Caco-2 (cell line): ENCODE measurements at regions of chr4 and their contacts with region 1.

Region 1: DNA sequence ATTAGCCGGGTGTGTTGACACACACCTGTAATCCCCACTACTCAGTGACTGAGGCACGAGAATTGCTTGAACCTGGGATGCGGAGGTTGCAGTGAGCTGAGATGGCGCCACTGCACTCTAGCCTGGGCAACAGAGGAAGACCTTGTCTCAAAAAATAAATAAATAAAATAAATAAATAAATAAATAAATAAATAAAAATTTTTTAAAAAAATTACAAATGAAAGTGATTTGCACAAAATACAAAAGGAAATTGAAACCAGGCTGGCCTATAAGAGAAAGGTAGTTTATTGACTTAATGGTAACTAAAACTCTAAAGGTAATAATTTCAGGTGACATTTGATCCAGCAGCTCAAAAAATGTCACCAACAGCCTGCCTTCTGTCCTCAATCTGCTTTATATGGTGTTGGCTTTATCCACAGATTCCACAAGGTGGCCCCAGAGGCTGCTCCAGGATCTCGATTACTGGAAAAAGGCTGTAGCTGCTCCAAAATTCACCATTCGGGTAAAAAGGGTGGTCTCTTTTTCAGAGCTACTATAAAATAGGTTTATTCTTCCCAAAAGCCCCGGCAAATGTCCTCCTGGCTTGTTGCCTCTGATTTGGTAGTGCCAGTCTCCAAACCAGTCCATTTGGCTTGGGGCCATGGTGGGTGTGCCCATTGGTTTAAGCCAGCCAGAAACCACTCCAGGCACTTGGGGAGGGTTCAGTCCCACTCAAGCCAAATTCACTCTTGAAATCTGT is 61.4 kb upstream of the TRIM2 start:
- DNase-seq: peak; percentile 74 to 78
- H3K4me3 ChIP-seq: no peak overlapping the region
- H3K4me3 Mint-ChIP-seq: no peak overlapping the region
- H3K27ac Mint-ChIP-seq: peak overlapping the region; percentile 53
- H3K4me1 ChIP-seq: peaks cover 8% of the 10 kb centered on the region
- H3K4me1 Mint-ChIP-seq: peaks cover 13% of the 10 kb centered on the region
- H3K27me3 ChIP-seq: no peaks in the 10 kb centered on the region
- H3K27me3 Mint-ChIP-seq: no peaks in the 10 kb centered on the region
- CTCF ChIP-seq: peak; percentile 73 to 78

Region 2: DNA sequence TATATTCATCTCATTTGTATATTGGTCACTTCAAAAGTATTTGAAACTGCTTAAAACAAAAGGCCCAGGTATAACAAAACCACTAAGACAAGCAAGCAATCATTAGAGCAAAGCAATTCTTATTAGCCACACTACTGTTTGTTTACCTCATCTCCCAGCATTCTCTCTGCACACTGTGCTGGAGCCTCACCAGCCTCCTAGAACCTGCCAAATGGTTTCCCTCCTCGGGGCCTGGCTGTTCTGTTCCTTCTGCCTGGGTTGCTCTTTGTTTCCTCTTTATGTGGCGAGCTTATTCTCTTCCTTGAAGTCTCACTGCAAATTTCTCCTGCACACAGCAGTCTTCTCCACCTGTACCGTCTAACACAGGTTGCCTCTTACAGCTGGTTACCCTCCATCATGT is 134.1 kb after region 1 on chr4:
- CTCF ChIA-PET with region 1: no interaction called
- POLR2A ChIA-PET with region 1: no interaction called
- intact Hi-C with region 1: loop called (anchors 5 kb)
- DNase-seq: no peak
- H3K4me3 ChIP-seq: no peak overlapping the region
- H3K4me3 Mint-ChIP-seq: no peak overlapping the region
- H3K27ac Mint-ChIP-seq: no peak overlapping the region
- H3K4me1 ChIP-seq: peaks cover 21% of the 10 kb centered on the region
- H3K4me1 Mint-ChIP-seq: peaks cover 29% of the 10 kb centered on the region
- H3K27me3 ChIP-seq: no peaks in the 10 kb centered on the region
- H3K27me3 Mint-ChIP-seq: no peaks in the 10 kb centered on the region
- CTCF ChIP-seq: no peak